ENCODE measurements at regions of chr7 and their contacts with region 1.

Region 1: GRCh38 chr7:3897438-3898385 is 596.7 kb downstream of the SDK1 start:
- DNase-seq: peak; percentile 62
- H3K4me3 ChIP-seq: no peak overlapping the region; a peak in 1 of 4 replicates
- H3K27ac ChIP-seq: no peak overlapping the region
- H3K4me1 ChIP-seq: peaks cover 0 to 7% of the 10 kb centered on the region in 2 experiments; a peak in 1 of 4 replicates
- H3K27me3 ChIP-seq: no peaks in the 10 kb centered on the region
- CTCF ChIP-seq: peak; percentile 94
- EP300 ChIP-seq: no peak
- RAD21 ChIP-seq: peak; percentile 79

Region 2: DNA sequence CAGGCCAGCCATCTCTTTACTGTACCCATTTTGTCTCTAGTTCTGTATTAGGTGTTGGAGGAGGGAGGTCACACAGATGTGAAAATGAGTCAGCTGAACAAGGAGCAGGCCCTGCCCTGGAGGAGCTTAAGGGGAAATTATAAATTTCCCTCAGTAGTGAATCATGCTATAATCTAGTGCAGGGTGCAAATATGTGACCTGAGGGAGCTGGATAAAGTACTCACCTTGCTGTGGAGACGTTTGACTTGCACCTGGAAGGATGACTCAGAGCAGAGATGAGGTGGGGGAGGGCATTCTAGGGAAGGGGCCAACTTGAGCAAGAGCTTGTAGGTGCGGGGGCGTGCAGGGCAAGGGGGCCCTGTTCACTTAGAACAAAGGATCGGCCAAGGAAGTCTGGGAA is 14.0 kb after region 1 on chr7:
- CTCF ChIA-PET with region 1: interaction called, 11 read pairs
- POLR2A ChIA-PET with region 1: interaction called, 3 read pairs
- DNase-seq: no peak
- H3K4me3 ChIP-seq: no peak overlapping the region
- H3K27ac ChIP-seq: no peak overlapping the region
- H3K4me1 ChIP-seq: peaks cover 0 to 12% of the 10 kb centered on the region in 2 experiments; a peak in 1 of 4 replicates
- H3K27me3 ChIP-seq: no peaks in the 10 kb centered on the region
- CTCF ChIP-seq: no peak
- EP300 ChIP-seq: no peak
- RAD21 ChIP-seq: no peak

Region 3: DNA sequence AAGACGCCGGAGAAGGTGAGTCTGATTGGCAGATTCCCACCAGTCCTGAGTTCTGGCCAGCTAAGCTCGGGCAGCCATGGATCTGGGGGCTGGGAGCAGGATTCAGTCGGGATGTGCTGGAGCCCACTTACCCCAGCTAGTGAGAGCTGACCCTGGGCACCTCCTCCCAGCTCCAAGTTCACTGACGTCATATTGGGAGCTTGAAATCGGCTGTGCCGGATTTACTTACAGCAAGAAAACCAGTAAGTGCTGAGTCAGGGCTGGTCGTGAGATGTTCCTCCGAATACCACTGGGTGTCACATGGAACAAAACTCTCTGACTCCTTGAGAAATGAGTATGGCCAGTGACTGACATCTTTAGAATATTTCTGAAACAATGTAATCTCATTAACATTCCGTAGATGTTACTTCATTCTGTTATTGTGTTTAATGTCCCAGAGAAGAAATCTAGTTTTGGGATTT is 24.5 kb after region 1 on chr7:
- CTCF ChIA-PET with region 1: interaction called, 14 read pairs
- POLR2A ChIA-PET with region 1: no interaction called
- DNase-seq: peak; percentile 35
- H3K4me3 ChIP-seq: no peak overlapping the region
- H3K27ac ChIP-seq: no peak overlapping the region
- H3K4me1 ChIP-seq: no peaks in the 10 kb centered on the region
- H3K27me3 ChIP-seq: no peaks in the 10 kb centered on the region
- CTCF ChIP-seq: no peak; the same call in 1 of the 2 replicates
- EP300 ChIP-seq: no peak
- RAD21 ChIP-seq: peak; percentile 59

Region 4: GRCh38 chr7:3978839-3979238 is 81.1 kb after region 1 on chr7:
- CTCF ChIA-PET with region 1: no interaction called
- POLR2A ChIA-PET with region 1: no interaction called
- DNase-seq: no peak
- H3K4me3 ChIP-seq: no peak overlapping the region
- H3K27ac ChIP-seq: peak overlapping the region in 1 of 2 experiments; percentile 28; a peak in 1 of 4 replicates
- H3K4me1 ChIP-seq: peaks cover 0 to 14% of the 10 kb centered on the region in 2 experiments; a peak in 2 of 4 replicates
- H3K27me3 ChIP-seq: no peaks in the 10 kb centered on the region
- CTCF ChIP-seq: no peak
- EP300 ChIP-seq: no peak
- RAD21 ChIP-seq: no peak